ENCODE measurements at regions of chr5 and their contacts with region 1.

Region 1: GRCh38 chr5:31232273-31232888 is 38.9 kb downstream of the CDH6 start:
- DNase-seq: peak; percentile 24
- H3K4me3 ChIP-seq: no peak overlapping the region
- H3K27ac ChIP-seq: no peak overlapping the region
- H3K4me1 ChIP-seq: no peaks in the 10 kb centered on the region
- H3K27me3 ChIP-seq: no peaks in the 10 kb centered on the region
- CTCF ChIP-seq: peak; percentile 72 to 82

Region 2: DNA sequence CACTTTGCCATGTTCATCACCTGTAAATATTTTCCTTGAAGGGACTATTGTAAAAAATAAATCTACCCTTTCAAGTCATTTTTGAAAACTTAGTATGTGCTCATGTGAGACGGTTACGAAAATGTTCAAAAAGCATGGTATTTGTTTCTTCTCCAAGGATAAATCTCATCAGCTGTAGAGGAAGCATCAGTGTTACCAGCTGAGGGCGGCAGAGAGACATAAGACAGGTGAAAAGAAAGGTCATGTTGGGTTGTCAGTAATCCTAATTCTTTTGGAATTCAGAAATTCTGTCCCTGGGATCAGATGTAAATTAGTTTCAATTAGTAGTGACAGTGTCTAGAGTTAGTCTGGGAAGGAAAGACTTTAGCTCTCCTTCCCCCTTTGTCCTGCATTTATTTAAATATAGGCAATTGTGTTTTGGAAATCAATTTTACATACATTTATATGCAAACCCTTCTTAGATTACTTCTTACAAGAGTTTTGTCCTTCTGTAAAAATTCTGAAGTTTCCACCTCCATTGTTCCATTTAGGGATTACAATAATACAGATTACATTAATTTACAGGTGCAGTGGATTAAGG is 830.8 kb before region 1 on chr5:
- CTCF ChIA-PET with region 1: no interaction called
- dilution Hi-C with region 1: no loop called
- in situ Hi-C with region 1: no loop called
- intact Hi-C with region 1: loop called (anchors 2 kb)
- DNase-seq: peak; percentile 4
- H3K4me3 ChIP-seq: no peak overlapping the region
- H3K27ac ChIP-seq: no peak overlapping the region
- H3K4me1 ChIP-seq: no peaks in the 10 kb centered on the region
- H3K27me3 ChIP-seq: no peaks in the 10 kb centered on the region
- CTCF ChIP-seq: peak; percentile 43 to 60

Region 3: GRCh38 chr5:31186672-31187267 is 45.6 kb before region 1 on chr5:
- CTCF ChIA-PET with region 1: no interaction called
- dilution Hi-C with region 1: no loop called
- in situ Hi-C with region 1: no loop called
- intact Hi-C with region 1: no loop called
- DNase-seq: peak; percentile 3
- H3K4me3 ChIP-seq: no peak overlapping the region
- H3K27ac ChIP-seq: no peak overlapping the region
- H3K4me1 ChIP-seq: no peaks in the 10 kb centered on the region
- H3K27me3 ChIP-seq: no peaks in the 10 kb centered on the region
- CTCF ChIP-seq: peak; percentile 76 to 77

Region 4: GRCh38 chr5:31415011-31415923 is 182.9 kb after region 1 on chr5:
- CTCF ChIA-PET with region 1: no interaction called
- dilution Hi-C with region 1: no loop called
- in situ Hi-C with region 1: no loop called
- intact Hi-C with region 1: loop called (anchors 10 kb)
- DNase-seq: no peak
- H3K4me3 ChIP-seq: no peak overlapping the region
- H3K27ac ChIP-seq: no peak overlapping the region
- H3K4me1 ChIP-seq: peaks cover 21% of the 10 kb centered on the region
- H3K27me3 ChIP-seq: no peaks in the 10 kb centered on the region
- CTCF ChIP-seq: peak in 1 of 2 donors; percentile 40